ENCODE measurements at regions of chr5 and their contacts with region 1.

Region 1: DNA sequence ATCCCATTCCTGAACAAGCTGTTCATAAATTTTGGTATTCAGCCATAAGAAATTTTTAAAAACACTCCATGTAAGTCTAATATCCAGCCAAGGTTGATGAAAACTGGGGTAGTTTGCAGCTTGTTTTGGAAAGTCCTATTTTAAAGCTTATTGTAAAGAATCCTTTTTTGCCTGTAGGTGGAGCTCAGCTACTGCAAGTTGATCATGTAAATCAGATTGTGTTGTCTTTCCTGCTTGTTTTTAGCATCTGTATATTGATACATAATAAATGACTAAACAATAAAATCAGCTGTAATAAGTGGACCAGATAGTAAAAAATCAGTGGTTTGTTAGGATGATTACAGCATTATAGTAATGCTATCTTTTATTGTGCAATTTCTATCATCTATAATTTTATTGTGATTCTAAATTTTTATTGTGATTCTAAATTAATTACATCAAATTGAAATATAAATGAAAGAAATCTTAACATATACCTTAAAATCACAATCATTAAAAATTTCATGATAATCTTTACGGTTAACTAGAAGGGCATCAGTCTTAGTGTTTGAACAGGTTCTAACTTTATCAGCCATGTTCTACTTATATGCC is 42.4 kb downstream of the CWC27 start:
- DNase-seq: no peak
- H3K4me3 ChIP-seq: no peak overlapping the region
- H3K27ac ChIP-seq: no peak overlapping the region
- H3K4me1 ChIP-seq: no peaks in the 10 kb centered on the region
- H3K27me3 ChIP-seq: no peaks in the 10 kb centered on the region
- CTCF ChIP-seq: peak; percentile 34 to 52 (median 44)
- POLR2A ChIP-seq: no peak

Region 2: DNA sequence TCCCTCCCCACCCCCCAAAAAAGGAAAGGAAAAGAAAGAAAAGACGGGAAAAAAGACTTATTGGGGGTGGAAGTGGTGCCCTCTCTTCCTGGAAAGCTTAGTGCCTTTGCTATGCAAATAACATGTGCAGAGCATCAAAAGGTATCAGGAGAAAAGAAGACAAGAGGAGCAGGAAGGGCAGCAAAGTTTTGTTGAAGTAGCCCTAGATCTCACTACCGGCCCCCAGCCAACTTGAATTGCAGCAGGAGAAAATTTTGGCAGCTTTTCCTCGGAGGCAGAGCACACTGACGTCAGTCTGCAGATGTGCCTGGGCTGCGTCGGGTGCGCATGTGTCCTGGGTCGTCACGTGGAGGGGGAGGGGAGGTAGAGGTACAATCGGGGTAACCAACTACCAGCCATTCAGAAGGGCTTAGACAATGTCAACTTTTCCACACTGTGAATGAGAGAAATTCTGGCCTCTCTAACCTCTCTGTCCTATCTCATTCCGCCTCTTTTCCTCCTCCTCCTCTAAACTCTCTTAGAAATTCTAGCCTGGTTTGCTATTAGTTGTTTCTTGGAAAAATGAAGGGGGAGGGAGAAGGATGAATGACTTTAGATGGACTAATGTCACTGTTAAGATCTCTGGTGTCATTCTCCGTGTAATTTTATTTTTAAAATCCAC is 670.6 kb after region 1 on chr5 and contains the start of gene ADAMTS6:
- intact Hi-C with region 1: loop called (anchors 10 kb)
- DNase-seq: peak in 1 of 2 donors; percentile 96
- H3K4me3 ChIP-seq: peak within 1 kb of the TSS; percentile 45
- H3K27ac ChIP-seq: peak within 1 kb of the TSS; percentile 91
- H3K4me1 ChIP-seq: peaks cover 17% of the 10 kb centered on the region
- H3K27me3 ChIP-seq: no peaks in the 10 kb centered on the region
- CTCF ChIP-seq: no peak
- POLR2A ChIP-seq: peak in 1 of 2 donors; percentile 26
- total RNA-seq, gene ADAMTS6: 1.5 TPM